WTC11 (cell line): ENCODE measurements at regions of chr11 and their contacts with region 1.

Region 1: DNA sequence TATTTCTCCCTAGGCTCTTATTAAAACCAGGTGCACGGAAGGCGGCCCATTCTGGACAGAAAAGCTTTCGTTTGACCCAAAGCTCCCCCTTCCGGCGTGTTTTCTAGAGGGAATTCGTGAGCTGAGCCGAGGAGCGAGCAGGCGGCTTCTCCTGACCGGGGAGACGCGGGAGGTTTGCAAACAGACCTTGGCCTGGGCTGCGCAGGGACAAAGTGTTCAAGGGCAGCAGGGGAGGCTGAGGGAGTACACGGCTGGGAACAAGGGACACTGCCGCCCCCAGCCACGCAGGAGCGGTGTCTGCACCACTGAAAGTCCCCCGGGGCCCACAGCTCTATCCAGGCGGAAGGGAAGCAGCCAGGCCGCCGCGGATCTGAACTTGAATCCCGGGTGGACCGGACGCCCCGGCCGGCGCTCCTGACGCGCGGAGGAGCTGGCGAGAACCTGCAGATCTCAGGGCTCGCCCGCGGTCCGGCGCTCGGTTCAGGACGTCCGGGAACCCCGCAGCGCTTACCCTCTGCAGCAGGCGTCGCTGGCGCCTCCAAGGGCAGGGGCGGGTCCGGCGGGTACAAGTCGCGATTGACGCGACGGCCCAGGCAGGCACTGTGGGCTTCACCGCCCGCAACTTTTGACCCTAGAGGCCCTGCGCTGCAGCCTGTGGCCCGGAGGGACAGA is 101.9 kb downstream of the WT1 start:
- DNase-seq: peak; percentile 79
- ATAC-seq: peak; percentile 86
- H3K4me3 Mint-ChIP-seq: peak overlapping the region; percentile 70
- H3K27ac Mint-ChIP-seq: no peak overlapping the region
- H3K4me1 Mint-ChIP-seq: peaks cover 20% of the 10 kb centered on the region
- H3K27me3 Mint-ChIP-seq: peaks cover 52% of the 10 kb centered on the region
- CTCF ChIP-seq: no peak

Region 2: DNA sequence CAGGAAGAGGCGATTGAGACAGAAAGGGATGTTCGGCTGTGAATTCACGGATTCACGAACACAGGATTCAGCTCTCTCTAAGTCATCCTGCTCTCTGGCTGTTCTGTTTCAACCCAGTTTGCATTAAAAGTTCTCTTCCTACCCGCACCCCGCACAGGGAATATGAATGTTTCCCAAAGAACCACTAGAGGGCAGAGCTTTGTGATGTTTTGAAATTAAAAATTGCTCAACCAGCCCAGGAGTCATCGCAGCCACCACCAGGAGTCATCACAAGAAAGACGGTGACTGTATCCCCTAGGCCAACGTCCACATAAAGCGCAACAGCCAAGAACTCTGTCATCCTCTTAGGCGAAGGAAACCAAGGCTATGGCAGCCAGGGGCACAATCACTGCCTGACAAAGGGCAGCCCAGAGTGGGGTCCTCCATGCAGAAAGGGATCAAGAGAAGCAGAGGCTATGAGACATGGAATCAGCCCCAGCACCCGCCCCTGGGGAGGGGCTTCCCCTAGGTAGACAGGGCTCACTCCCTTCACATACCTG is 20.5 kb before region 1 on chr11:
- CTCF ChIA-PET with region 1: interaction called, 10 read pairs
- POLR2A ChIA-PET with region 1: no interaction called
- DNase-seq: peak; percentile 39
- ATAC-seq: peak; percentile 86
- H3K4me3 Mint-ChIP-seq: peak overlapping the region; percentile 9; the same call in 1 of the 2 replicates
- H3K27ac Mint-ChIP-seq: no peak overlapping the region
- H3K4me1 Mint-ChIP-seq: peaks cover 19% of the 10 kb centered on the region
- H3K27me3 Mint-ChIP-seq: no peaks in the 10 kb centered on the region; the same call in 1 of the 2 replicates
- CTCF ChIP-seq: peak; percentile 54; the same call in 1 of the 2 replicates

Region 3: DNA sequence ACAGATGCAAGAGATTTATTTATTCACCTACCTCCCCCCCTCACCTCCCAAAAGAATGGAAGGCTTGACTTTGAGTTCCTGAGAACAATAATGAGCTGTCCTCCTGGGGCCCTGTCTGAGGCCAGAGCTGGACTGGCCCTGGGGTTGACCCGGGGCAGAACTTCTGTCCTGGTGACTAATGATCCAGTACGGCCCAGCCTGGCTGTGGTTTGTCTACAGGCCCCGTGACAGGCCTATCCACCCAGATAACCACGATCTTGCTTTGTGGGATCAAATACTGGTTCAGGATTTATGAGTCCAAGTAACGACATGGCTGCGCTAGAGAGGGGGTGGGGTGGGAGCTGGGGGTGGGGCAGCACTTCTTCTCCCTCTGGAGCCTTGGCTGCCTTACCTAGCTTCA is 20.4 kb after region 1 on chr11:
- CTCF ChIA-PET with region 1: interaction called, 12 read pairs
- POLR2A ChIA-PET with region 1: no interaction called
- DNase-seq: no peak
- ATAC-seq: no peak
- H3K4me3 Mint-ChIP-seq: no peak overlapping the region
- H3K27ac Mint-ChIP-seq: no peak overlapping the region
- H3K4me1 Mint-ChIP-seq: no peaks in the 10 kb centered on the region
- H3K27me3 Mint-ChIP-seq: no peaks in the 10 kb centered on the region; the same call in 1 of the 2 replicates
- CTCF ChIP-seq: no peak

Region 4: GRCh38 chr11:32374261-32374711 is 40.8 kb after region 1 on chr11:
- CTCF ChIA-PET with region 1: interaction called, 10 read pairs
- POLR2A ChIA-PET with region 1: no interaction called
- DNase-seq: peak; percentile 86
- ATAC-seq: peak; percentile 98
- H3K4me3 Mint-ChIP-seq: no peak overlapping the region
- H3K27ac Mint-ChIP-seq: no peak overlapping the region
- H3K4me1 Mint-ChIP-seq: 0 out of 2 replicates have a peak, but pooled peaks cover 6% of the 10 kb centered on the region
- H3K27me3 Mint-ChIP-seq: peaks cover 10% of the 10 kb centered on the region
- CTCF ChIP-seq: peak; percentile 75